Ascending aorta (tissue), 2 donors: ENCODE measurements at regions of chr3 and their contacts with region 1.

Region 1: DNA sequence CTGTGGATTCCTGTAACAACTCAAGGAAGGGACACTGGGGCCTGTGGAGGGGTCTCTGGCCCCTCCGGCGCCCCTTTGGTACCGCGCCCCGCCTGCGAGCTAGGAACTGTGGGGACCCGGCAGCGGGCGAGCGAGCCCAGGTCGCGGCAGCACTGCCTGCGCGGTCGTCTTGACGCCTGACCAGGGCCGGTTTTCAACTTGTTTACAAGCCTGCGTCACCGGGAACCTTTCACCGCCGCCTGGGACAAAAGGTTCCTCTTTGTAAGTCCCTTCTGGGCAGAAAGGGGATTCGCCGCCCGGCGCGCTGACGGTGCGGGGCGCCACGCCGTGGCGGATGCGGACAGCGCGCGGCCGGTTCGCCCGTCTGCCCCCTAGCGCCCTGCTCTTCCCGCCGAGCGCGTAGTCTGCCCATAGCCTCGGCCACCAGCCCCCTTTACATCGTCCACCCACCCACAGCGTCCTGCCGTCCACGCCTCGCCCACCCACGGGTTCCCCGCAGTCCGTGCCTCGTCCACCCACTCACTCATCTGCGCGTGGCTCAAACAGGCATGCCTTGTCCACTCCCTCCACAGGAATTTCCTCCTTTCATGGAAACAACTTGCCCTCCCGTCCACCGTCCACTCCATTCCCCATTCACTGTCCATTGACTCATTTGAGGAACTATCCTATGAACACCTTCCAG is 5.5 kb upstream of the CFAP100 start:
- DNase-seq: peak; percentile 82 to 98
- H3K4me3 ChIP-seq: peak overlapping the region; percentile 39 to 61
- H3K27ac ChIP-seq: peak overlapping the region; percentile 90 to 93
- H3K4me1 ChIP-seq: peaks cover 4 to 6% of the 10 kb centered on the region in 2 donors
- H3K27me3 ChIP-seq: no peaks in the 10 kb centered on the region
- CTCF ChIP-seq: peak; percentile 96 to 99 (median 97)

Region 2: GRCh38 chr3:126134219-126134975 is 254.9 kb before region 1 on chr3:
- intact Hi-C with region 1: loop called (anchors 1 kb)
- DNase-seq: peak in 1 of 2 donors; percentile 80
- H3K4me3 ChIP-seq: no peak overlapping the region
- H3K27ac ChIP-seq: no peak overlapping the region
- H3K4me1 ChIP-seq: no peaks in the 10 kb centered on the region
- H3K27me3 ChIP-seq: no peaks in the 10 kb centered on the region
- CTCF ChIP-seq: peak; percentile 80 to 87 (median 81)

Region 3: DNA sequence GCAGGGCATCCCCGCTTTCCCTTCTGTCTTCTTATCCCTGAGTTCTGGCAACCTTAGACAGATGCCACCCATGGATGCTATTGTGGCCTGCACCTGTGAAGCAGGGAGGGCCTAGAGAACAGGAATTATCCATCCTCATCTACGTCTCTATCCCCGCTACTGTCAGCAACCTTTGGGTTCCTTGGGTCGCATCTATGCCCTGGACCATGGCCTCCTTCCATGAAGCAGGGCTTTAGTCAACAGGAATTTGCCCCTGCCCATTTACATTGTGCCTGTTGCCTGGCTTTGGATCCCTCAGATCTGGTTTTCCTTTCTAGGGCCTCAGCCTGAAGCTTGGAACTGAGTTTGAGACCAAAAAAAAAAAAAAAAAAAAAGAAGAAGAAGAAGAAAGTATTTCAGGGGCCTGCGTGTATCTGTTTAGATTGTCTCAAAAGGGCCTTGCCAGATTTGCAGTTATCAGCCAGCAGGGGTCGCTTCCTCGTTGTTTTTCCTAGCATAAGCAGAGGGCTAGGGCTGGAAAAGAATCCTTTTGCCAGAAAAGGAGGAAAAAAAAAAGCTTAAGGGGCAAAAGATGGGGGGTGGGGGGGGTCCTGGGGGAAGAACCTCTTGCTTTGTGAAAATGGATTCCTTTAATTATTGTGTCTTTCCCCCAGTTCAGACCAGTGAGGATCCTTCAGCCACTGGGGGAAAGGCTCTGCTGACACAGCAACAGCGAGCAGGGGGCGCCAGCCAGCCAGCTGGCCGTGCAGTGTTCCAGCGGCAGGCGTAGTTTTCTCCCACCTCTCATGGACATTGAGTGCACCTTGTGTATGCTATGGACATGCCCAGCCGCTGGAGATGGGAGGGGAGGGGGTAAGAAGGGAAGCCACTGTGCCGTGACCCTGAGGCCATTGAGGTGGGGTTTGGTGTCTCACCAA is 143.2 kb before region 1 on chr3:
- intact Hi-C with region 1: loop called (anchors 1 kb)
- DNase-seq: peak in 1 of 2 donors; percentile 74
- H3K4me3 ChIP-seq: no peak overlapping the region
- H3K27ac ChIP-seq: no peak overlapping the region
- H3K4me1 ChIP-seq: no peaks in the 10 kb centered on the region
- H3K27me3 ChIP-seq: no peaks in the 10 kb centered on the region
- CTCF ChIP-seq: peak; percentile 26 to 55 (median 44)

Region 4: GRCh38 chr3:126259411-126260391 is 129.6 kb before region 1 on chr3:
- intact Hi-C with region 1: loop called (anchors 1 kb)
- DNase-seq: peak; percentile 36 to 91
- H3K4me3 ChIP-seq: peak overlapping the region in 1 of 2 donors; percentile 40
- H3K27ac ChIP-seq: peak overlapping the region; percentile 55 to 72
- H3K4me1 ChIP-seq: peaks cover 4 to 11% of the 10 kb centered on the region in 2 donors
- H3K27me3 ChIP-seq: no peaks in the 10 kb centered on the region
- CTCF ChIP-seq: peak; percentile 84 to 85 (median 85)

Region 5: GRCh38 chr3:126287536-126288241 is 101.6 kb before region 1 on chr3:
- intact Hi-C with region 1: loop called (anchors 1 kb)
- DNase-seq: peak in 1 of 2 donors; percentile 88
- H3K4me3 ChIP-seq: peak overlapping the region; percentile 42 to 65
- H3K27ac ChIP-seq: peak overlapping the region; percentile 87 to 93
- H3K4me1 ChIP-seq: peaks cover 0 to 20% of the 10 kb centered on the region in 2 donors
- H3K27me3 ChIP-seq: no peaks in the 10 kb centered on the region
- CTCF ChIP-seq: peak in 1 of 3 experiments; percentile 7